ENCODE measurements at regions of chr14 and their contacts with region 1.

Region 1: DNA sequence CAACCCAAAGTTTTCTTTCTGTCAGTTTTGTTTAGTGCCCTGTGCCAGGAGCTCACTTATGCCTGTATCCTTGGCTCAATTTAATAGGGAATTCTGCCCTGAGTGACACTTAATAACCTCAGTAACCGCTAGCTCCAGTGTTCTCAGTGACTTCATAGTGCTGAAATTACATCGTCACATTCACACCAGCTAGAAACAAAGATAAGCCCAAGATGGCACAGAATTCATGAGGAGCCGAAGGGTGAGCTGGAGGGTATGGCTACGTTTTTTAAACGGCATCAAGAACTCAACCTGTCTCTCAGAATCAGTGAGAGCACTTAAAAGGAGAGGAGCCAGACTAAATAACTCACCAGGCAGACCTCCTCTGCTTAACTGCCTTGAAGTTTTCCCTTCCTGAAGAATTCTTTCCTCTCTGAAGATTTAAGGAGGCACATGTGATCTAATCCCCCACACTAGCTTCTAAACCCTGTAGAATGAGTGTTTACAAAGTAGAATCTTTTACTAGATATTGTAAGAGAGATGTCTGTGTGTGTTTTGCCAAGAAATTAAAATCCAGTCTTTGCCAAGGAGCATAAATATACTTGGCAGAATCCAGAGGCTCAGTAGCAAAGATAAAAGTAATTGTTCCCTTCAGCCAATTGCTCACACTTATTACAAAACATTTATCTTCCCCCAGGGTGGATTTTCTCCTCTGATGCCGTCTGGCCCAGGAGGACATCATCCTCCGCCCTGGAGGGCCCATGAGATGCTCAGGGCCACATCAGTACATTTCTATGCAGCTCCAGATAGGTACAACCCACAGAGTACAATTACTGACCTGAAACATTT is 37.3 kb downstream of the PTGER2 start:
- DNase-seq: peak; percentile 47
- ATAC-seq: peak; percentile 75
- H3K4me3 Mint-ChIP-seq: peak overlapping the region; percentile 59
- H3K27ac Mint-ChIP-seq: peak overlapping the region; percentile 96
- H3K4me1 Mint-ChIP-seq: peaks cover 68% of the 10 kb centered on the region
- H3K27me3 Mint-ChIP-seq: peaks cover 1% of the 10 kb centered on the region
- CTCF ChIP-seq: no peak

Region 2: GRCh38 chr14:52313903-52314594 is 37.4 kb before region 1 on chr14 and contains the start of gene PTGER2:
- CTCF ChIA-PET with region 1: interaction called, 4 read pairs
- POLR2A ChIA-PET with region 1: interaction called, 16 read pairs
- intact Hi-C with region 1: loop called (anchors 5 kb)
- DNase-seq: peak; percentile 94
- ATAC-seq: peak; percentile 75
- H3K4me3 Mint-ChIP-seq: peak within 1 kb of the TSS; percentile 90
- H3K27ac Mint-ChIP-seq: peak within 1 kb of the TSS; percentile 89
- H3K4me1 Mint-ChIP-seq: peaks cover 58% of the 10 kb centered on the region
- H3K27me3 Mint-ChIP-seq: peaks cover 13% of the 10 kb centered on the region
- CTCF ChIP-seq: no peak
- total RNA-seq, gene PTGER2: 19.5 to 19.9 TPM

Region 3: GRCh38 chr14:52434955-52435354 is 83.5 kb after region 1 on chr14:
- CTCF ChIA-PET with region 1: no interaction called
- POLR2A ChIA-PET with region 1: no interaction called
- intact Hi-C with region 1: no loop called
- DNase-seq: no peak
- ATAC-seq: no peak
- H3K4me3 Mint-ChIP-seq: no peak overlapping the region
- H3K27ac Mint-ChIP-seq: no peak overlapping the region
- H3K4me1 Mint-ChIP-seq: no peaks in the 10 kb centered on the region
- H3K27me3 Mint-ChIP-seq: no peaks in the 10 kb centered on the region
- CTCF ChIP-seq: no peak

Measured in activated CD8-positive, alpha-beta T cell treated with anti-CD3 and anti-CD28 coated beads for 36 hours (primary cell).